B cell (primary cell): ENCODE measurements at regions of chr3 and their contacts with region 1.

Region 1: GRCh38 chr3:5170975-5171374 is 16.5 kb upstream of the EDEM1 start:
- DNase-seq: no peak
- ATAC-seq: no peak
- H3K4me3 ChIP-seq: no peak overlapping the region
- H3K4me3 Mint-ChIP-seq: no peak overlapping the region
- H3K27ac ChIP-seq: no peak overlapping the region
- H3K27ac Mint-ChIP-seq: no peak overlapping the region
- H3K4me1 ChIP-seq: peaks cover 4 to 8% of the 10 kb centered on the region in 2 donors
- H3K4me1 Mint-ChIP-seq: peaks cover 25% of the 10 kb centered on the region
- H3K27me3 ChIP-seq: no peaks in the 10 kb centered on the region
- H3K27me3 Mint-ChIP-seq: no peaks in the 10 kb centered on the region
- CTCF ChIP-seq: no peak

Region 2: DNA sequence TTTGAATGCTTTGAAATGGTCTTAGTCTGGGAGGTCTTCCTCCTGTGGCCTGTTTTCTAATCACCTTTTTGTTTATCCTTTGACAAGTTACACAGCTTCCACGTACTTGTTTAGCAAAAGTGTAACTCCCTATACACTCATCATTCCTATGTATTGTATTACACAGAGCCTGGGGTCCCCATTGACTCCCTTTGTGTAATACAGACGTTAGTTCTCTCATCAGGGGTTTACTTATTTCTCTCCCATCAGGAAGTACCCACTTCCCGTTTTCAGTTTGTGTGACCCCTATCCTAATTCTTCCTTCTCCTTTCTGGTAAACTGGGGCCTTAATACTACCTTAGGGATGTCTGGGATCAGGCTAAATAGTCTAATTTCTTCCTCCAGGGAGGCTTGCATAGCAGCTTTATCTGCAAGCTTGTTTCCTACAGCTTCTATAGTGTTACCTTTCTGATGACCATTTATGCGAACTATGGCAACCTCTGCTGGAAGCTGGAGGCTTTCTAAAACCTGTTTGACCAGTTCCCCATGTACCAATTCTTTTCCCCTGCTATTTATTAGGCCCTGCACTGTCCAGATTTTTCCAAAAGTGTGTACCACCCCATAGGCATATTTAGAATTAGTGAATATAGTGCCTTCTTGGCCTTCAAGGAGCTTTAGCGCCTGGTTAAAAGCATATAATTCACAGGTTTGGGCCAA is 26.5 kb before region 1 on chr3:
- CTCF ChIA-PET with region 1: no interaction called
- POLR2A ChIA-PET with region 1: no interaction called
- intact Hi-C with region 1: no loop called
- DNase-seq: no peak
- ATAC-seq: no peak
- H3K4me3 ChIP-seq: no peak overlapping the region
- H3K4me3 Mint-ChIP-seq: no peak overlapping the region
- H3K27ac ChIP-seq: no peak overlapping the region
- H3K27ac Mint-ChIP-seq: no peak overlapping the region
- H3K4me1 ChIP-seq: peaks cover 16 to 17% of the 10 kb centered on the region in 2 donors
- H3K4me1 Mint-ChIP-seq: peaks cover 69% of the 10 kb centered on the region
- H3K27me3 ChIP-seq: no peaks in the 10 kb centered on the region
- H3K27me3 Mint-ChIP-seq: no peaks in the 10 kb centered on the region
- CTCF ChIP-seq: no peak

Region 3: GRCh38 chr3:5205165-5205941 is 34.4 kb after region 1 on chr3:
- CTCF ChIA-PET with region 1: no interaction called
- POLR2A ChIA-PET with region 1: no interaction called
- intact Hi-C with region 1: loop called (anchors 5 kb)
- DNase-seq: peak; percentile 73
- ATAC-seq: peak; percentile 97
- H3K4me3 ChIP-seq: no peak overlapping the region
- H3K4me3 Mint-ChIP-seq: peak overlapping the region; percentile 71
- H3K27ac ChIP-seq: peak overlapping the region; percentile 3 to 78
- H3K27ac Mint-ChIP-seq: peak overlapping the region; percentile 90
- H3K4me1 ChIP-seq: peaks cover 11 to 14% of the 10 kb centered on the region in 2 donors
- H3K4me1 Mint-ChIP-seq: peaks cover 30% of the 10 kb centered on the region
- H3K27me3 ChIP-seq: no peaks in the 10 kb centered on the region
- H3K27me3 Mint-ChIP-seq: no peaks in the 10 kb centered on the region
- CTCF ChIP-seq: no peak

Region 4: DNA sequence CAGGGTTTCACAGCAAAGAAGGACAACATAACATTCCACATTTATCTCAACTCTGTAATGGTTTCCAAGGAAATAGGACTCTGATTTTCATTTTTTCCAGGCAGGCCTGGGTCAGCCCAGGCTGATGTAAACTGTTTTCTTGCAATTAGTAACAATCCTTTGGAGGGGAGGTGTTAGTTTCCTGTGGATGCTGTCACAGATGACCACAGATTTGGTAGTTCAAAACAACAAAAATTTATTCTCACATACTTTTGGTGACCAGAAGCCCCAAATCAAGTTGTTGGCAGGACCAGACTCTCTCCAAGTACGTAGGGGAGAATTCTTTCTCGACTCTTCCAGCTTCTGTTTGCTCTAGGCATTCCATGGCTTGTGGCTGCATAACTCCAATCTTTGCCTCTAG is 104.6 kb after region 1 on chr3:
- CTCF ChIA-PET with region 1: no interaction called
- POLR2A ChIA-PET with region 1: no interaction called
- intact Hi-C with region 1: no loop called
- DNase-seq: no peak
- ATAC-seq: no peak
- H3K4me3 ChIP-seq: no peak overlapping the region
- H3K4me3 Mint-ChIP-seq: no peak overlapping the region
- H3K27ac ChIP-seq: no peak overlapping the region
- H3K27ac Mint-ChIP-seq: no peak overlapping the region
- H3K4me1 ChIP-seq: no peaks in the 10 kb centered on the region
- H3K4me1 Mint-ChIP-seq: peaks cover 6% of the 10 kb centered on the region
- H3K27me3 ChIP-seq: no peaks in the 10 kb centered on the region
- H3K27me3 Mint-ChIP-seq: no peaks in the 10 kb centered on the region
- CTCF ChIP-seq: no peak